ENCODE measurements at regions of chr5 and their contacts with region 1.

Region 1: DNA sequence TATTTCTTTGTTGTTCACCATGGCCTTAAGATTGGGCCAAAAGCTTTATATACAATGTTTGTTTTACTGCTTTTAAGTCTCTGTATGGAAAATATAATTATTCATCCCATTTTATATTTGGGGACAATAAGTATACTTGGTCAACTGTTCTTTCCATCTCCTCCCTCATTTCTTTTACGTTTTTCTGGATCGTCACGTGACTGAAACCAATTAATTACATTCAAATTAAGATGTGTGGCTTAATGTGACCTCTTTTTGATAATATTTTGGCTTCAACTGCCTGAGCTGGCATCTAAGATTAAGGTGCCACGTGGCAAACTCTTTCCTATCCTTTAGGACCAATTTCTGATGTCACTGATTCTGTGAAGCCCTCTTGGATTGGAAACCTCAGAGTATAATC is 250.1 kb upstream of the SGCD start:
- DNase-seq: no peak
- ATAC-seq: no peak
- H3K4me3 ChIP-seq: no peak overlapping the region
- H3K4me3 Mint-ChIP-seq: no peak overlapping the region
- H3K27ac ChIP-seq: no peak overlapping the region
- H3K27ac Mint-ChIP-seq: no peak overlapping the region
- H3K4me1 ChIP-seq: no peaks in the 10 kb centered on the region
- H3K4me1 Mint-ChIP-seq: no peaks in the 10 kb centered on the region
- H3K27me3 ChIP-seq: peaks cover 0 to 2% of the 10 kb centered on the region in 2 experiments
- H3K27me3 Mint-ChIP-seq: peaks cover 0 to 4% of the 10 kb centered on the region in 2 donors

Region 2: GRCh38 chr5:156036640-156037039 is 40.3 kb before region 1 on chr5:
- CTCF ChIA-PET with region 1: interaction called in 1 of 2 experiments, 11 read pairs
- POLR2A ChIA-PET with region 1: no interaction called
- DNase-seq: no peak
- ATAC-seq: no peak
- H3K4me3 ChIP-seq: no peak overlapping the region
- H3K4me3 Mint-ChIP-seq: no peak overlapping the region
- H3K27ac ChIP-seq: no peak overlapping the region
- H3K27ac Mint-ChIP-seq: no peak overlapping the region
- H3K4me1 ChIP-seq: no peaks in the 10 kb centered on the region
- H3K4me1 Mint-ChIP-seq: no peaks in the 10 kb centered on the region
- H3K27me3 ChIP-seq: no peaks in the 10 kb centered on the region
- H3K27me3 Mint-ChIP-seq: no peaks in the 10 kb centered on the region